Activated CD4-positive, alpha-beta T cell treated with anti-CD3 and anti-CD28 coated beads for 36 hours (primary cell): ENCODE measurements at regions of chr6 and their contacts with region 1.

Region 1: GRCh38 chr6:28940858-28941680 is 17.3 kb upstream of the TRIM27 start:
- DNase-seq: peak; percentile 87
- ATAC-seq: peak; percentile 72
- H3K4me3 Mint-ChIP-seq: peak overlapping the region; percentile 79
- H3K27ac Mint-ChIP-seq: peak overlapping the region; percentile 96
- H3K4me1 Mint-ChIP-seq: peaks cover 39% of the 10 kb centered on the region
- H3K27me3 Mint-ChIP-seq: no peaks in the 10 kb centered on the region

Region 2: GRCh38 chr6:27503436-27504030 is 1437.5 kb before region 1 on chr6:
- CTCF ChIA-PET with region 1: no interaction called
- POLR2A ChIA-PET with region 1: no interaction called
- intact Hi-C with region 1: loop called in 1 of 2 experiments (anchors 5 kb)
- DNase-seq: peak; percentile 87
- ATAC-seq: peak; percentile 40
- H3K4me3 Mint-ChIP-seq: peak overlapping the region; percentile 88
- H3K27ac Mint-ChIP-seq: peak overlapping the region; percentile 83
- H3K4me1 Mint-ChIP-seq: peaks cover 26% of the 10 kb centered on the region
- H3K27me3 Mint-ChIP-seq: peaks cover 4% of the 10 kb centered on the region

Region 3: DNA sequence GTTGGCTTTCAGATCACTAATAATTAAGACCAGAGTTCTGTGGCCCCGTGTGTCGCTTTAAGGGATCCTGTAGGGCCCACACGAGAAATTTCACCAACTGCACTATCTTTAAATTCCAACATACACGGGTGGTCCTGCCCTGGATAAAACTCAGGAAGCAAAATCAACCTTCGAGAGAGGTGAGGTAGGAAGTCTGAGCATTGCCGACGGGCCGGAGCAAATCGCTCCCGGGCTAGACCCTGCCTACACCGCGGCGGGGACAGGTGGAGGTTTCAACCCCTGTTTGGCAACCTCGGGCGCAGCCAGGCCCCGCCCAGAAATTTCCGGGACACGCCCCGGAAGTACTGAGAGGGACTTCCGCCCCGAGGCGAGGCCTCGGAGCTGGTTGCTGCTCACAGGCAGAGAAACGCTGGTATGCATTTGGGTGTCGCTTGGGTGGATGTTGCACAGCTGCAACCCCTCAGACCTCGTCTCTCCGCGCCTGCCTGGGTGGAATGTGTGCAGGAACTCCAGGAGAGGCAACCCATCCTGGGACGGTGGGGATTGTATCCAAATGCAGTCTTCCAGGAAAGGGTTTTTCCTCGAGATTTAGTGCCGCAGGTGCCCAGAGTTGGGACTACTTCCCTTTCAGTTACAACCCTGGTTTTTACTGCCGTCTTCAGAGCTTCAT is 779.5 kb before region 1 on chr6:
- CTCF ChIA-PET with region 1: no interaction called
- POLR2A ChIA-PET with region 1: no interaction called
- intact Hi-C with region 1: no loop called
- DNase-seq: peak; percentile 89
- ATAC-seq: peak; percentile 98
- H3K4me3 Mint-ChIP-seq: peak overlapping the region; percentile 72
- H3K27ac Mint-ChIP-seq: peak overlapping the region; percentile 40
- H3K4me1 Mint-ChIP-seq: peaks cover 14% of the 10 kb centered on the region
- H3K27me3 Mint-ChIP-seq: peaks cover 2% of the 10 kb centered on the region

Region 4: GRCh38 chr6:28586962-28587745 is 353.9 kb before region 1 on chr6:
- CTCF ChIA-PET with region 1: no interaction called
- POLR2A ChIA-PET with region 1: no interaction called
- intact Hi-C with region 1: loop called in 1 of 2 experiments (anchors 5 kb)
- DNase-seq: peak; percentile 83
- ATAC-seq: peak; percentile 87
- H3K4me3 Mint-ChIP-seq: peak overlapping the region; percentile 84
- H3K27ac Mint-ChIP-seq: peak overlapping the region; percentile 64
- H3K4me1 Mint-ChIP-seq: peaks cover 34% of the 10 kb centered on the region
- H3K27me3 Mint-ChIP-seq: peaks cover 55% of the 10 kb centered on the region

Region 5: GRCh38 chr6:28725890-28726348 is 215.2 kb before region 1 on chr6:
- CTCF ChIA-PET with region 1: no interaction called
- POLR2A ChIA-PET with region 1: no interaction called
- intact Hi-C with region 1: loop called (anchors 5 to 10 kb)
- DNase-seq: peak; percentile 22
- ATAC-seq: no peak
- H3K4me3 Mint-ChIP-seq: no peak overlapping the region
- H3K27ac Mint-ChIP-seq: no peak overlapping the region
- H3K4me1 Mint-ChIP-seq: peaks cover 11% of the 10 kb centered on the region
- H3K27me3 Mint-ChIP-seq: peaks cover 58% of the 10 kb centered on the region

Region 6: DNA sequence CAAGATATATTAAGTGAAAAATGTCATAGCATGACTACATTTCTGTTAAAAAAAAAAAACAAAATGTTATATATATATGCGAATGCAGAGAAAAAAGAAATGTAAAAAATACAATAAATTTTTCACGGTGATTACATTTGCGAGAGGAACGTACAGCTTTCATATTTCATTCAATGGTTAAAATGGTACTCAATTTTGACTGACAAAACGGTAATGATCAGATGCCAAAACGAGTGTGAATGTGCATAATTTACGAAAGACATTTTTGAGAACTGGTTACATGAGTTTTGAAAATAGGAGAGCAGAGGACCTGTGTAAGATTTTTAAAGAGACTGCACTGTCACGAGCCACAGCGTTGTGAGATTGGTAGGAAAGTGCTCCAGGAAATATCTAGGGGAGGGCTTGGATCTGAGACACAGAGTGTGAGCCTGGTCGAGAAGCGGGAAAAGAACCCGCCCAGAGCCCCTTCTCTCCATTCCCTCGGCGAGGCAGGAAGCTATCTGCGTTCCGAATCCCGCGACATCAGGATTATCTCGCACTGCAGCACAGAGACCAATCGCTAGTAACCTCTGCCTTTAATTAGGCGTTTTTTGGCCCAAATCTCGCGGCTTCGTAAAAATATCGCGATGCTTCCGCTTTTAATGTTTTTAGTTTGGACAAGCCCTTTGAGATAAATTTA is 45.8 kb before region 1 on chr6:
- CTCF ChIA-PET with region 1: interaction called, 4 read pairs
- POLR2A ChIA-PET with region 1: no interaction called
- intact Hi-C with region 1: loop called (anchors 1 kb)
- DNase-seq: peak; percentile 94
- ATAC-seq: peak; percentile 82
- H3K4me3 Mint-ChIP-seq: peak overlapping the region; percentile 98
- H3K27ac Mint-ChIP-seq: peak overlapping the region; percentile 99
- H3K4me1 Mint-ChIP-seq: peaks cover 9% of the 10 kb centered on the region
- H3K27me3 Mint-ChIP-seq: no peaks in the 10 kb centered on the region

Region 7: DNA sequence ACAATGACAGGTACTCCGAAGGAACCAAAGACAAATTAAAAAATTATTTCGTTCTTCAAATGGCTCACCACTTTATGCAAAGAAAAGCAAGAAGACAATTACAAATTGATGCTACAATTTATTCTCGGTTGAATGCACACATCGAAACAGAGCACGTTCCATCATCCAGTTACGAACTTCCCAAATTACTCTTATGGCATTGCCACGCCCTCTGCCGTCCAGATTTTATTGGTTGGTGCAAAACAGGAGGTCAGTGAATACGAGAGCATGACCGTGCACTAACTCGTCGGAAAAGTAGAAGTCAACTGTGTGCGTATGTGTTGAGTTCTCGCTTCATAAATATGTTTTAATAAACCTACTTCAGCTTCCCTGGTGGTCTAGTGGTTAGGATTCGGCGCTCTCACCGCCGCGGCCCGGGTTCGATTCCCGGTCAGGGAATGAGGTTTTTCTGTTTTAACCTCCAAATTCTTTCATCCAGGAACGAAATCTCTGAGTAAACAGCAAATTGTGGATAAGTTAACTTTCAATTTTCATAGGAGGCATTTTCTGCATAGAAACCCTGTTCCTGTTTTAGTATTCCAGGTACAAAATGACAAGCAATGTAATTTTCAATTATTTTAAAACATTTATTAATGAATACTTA is 40.9 kb after region 1 on chr6:
- CTCF ChIA-PET with region 1: interaction called, 9 read pairs
- POLR2A ChIA-PET with region 1: interaction called, 5 read pairs
- intact Hi-C with region 1: loop called (anchors 1 kb)
- DNase-seq: peak; percentile 82
- ATAC-seq: peak; percentile 42
- H3K4me3 Mint-ChIP-seq: peak overlapping the region; percentile 86
- H3K27ac Mint-ChIP-seq: peak overlapping the region; percentile 79
- H3K4me1 Mint-ChIP-seq: peaks cover 42% of the 10 kb centered on the region
- H3K27me3 Mint-ChIP-seq: peaks cover 47% of the 10 kb centered on the region

Region 8: DNA sequence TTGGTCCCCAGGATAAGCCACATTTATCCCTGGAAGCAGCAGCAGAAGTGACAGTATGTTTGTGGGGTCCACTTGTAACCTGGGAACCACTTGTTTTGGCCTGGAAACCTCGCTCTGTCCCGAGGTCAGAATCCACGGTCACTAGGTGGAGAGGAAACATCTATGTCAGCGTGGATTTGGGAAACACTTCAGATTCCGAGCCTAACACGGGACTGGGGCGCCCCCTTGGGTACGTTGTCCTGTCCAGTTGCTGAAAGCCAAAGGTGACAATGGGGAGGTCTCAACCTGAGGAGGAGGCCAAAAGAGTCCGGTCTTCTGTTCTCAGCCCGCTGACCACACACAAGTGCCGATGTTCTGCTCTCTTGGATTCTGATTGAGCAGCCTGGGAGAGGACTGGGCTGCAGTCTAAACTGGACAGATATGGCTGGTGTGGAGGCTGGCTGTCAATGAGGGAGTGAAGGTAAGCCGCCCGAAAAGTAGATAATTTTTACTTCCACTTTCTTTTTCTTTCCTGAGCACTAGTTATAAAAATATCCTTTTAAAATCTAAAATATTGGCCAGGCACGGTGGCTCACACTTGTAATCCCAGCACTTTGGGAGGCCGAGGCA is 744.8 kb after region 1 on chr6:
- CTCF ChIA-PET with region 1: no interaction called
- POLR2A ChIA-PET with region 1: no interaction called
- intact Hi-C with region 1: no loop called
- DNase-seq: no peak
- ATAC-seq: no peak
- H3K4me3 Mint-ChIP-seq: no peak overlapping the region
- H3K27ac Mint-ChIP-seq: no peak overlapping the region
- H3K4me1 Mint-ChIP-seq: no peaks in the 10 kb centered on the region
- H3K27me3 Mint-ChIP-seq: no peaks in the 10 kb centered on the region